Colonic mucosa (tissue), 4 donors: ENCODE measurements at regions of chr3 and their contacts with region 1.

Region 1: DNA sequence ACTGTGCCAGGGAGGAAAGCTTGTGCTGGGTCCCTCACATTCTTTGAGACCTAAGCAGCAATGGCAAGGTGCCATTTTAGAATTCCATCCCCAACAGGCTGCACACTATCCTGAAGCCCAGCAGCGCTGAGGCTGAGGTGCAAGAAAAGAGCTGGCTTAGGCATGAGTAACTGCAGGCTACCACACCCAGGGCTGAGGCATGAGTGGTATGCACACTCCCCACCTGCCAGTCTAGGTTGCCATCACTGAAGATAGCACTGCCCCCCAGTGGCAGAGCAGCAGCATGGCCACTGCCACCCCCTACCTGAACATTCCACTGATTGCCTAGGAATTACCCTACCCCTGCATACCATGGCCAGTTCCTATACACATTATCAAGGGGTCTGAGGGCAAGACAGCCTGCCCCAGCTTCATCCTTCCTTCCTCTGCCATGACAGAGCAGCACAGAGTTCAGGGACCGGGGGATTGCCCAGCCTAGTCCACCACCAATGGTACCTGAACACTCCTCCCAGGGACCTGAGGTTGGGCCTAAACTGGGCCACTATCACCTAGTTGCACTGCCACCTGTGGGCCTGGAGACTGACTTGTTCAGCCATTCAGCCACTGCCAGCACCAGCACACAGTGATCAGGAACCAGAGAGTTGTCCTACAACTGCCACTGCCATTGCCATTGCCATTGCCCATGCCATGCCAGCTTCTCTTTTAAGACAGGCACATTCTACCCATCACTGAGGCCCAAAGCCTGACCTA is 129.8 kb downstream of the SATB1 start:
- DNase-seq: peak; percentile 53
- H3K4me3 ChIP-seq: no peak overlapping the region
- H3K27ac ChIP-seq: no peak overlapping the region
- H3K4me1 ChIP-seq: no peaks in the 10 kb centered on the region
- H3K27me3 ChIP-seq: no peaks in the 10 kb centered on the region
- CTCF ChIP-seq: peak; percentile 55

Region 2: DNA sequence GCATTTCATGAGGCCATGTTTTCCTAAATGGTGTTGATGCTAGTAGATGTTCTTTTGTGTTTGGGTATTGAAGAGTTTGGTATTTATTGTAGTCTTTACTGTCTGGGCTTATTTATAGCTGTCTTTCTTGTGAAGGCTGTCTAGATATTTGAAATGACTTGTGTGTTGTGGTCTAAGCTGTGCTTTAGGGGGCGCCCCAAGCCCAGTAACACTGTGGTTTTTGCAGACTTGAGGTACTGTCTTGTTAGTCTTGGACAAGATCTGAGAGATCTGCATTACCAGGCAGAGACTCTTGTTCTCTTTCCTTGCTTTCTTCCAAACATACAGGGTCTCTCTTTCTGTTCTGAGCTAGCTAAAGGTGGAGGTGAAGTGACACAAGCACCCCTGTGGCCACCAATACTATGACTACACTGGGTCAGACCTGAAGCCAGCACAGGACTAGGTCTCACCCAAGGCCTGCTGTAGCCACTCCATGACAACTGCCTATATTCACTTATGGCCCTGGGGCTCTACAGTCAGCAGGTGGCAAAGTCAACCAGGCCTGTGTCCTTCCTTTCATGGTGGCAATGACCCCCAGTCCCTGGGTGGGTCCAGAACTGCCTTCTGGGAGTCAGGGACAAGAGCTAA is 400.8 kb before region 1 on chr3:
- intact Hi-C with region 1: loop called (anchors 10 kb)
- DNase-seq: peak; percentile 47
- H3K4me3 ChIP-seq: no peak overlapping the region
- H3K27ac ChIP-seq: no peak overlapping the region
- H3K4me1 ChIP-seq: no peaks in the 10 kb centered on the region
- H3K27me3 ChIP-seq: no peaks in the 10 kb centered on the region
- CTCF ChIP-seq: peak; percentile 43

Region 3: GRCh38 chr3:18382760-18383369 is 87.5 kb after region 1 on chr3:
- intact Hi-C with region 1: no loop called
- DNase-seq: no peak
- H3K4me3 ChIP-seq: no peak overlapping the region
- H3K27ac ChIP-seq: no peak overlapping the region
- H3K4me1 ChIP-seq: no peaks in the 10 kb centered on the region
- H3K27me3 ChIP-seq: no peaks in the 10 kb centered on the region
- CTCF ChIP-seq: no peak